ENCODE measurements at regions of chr5 and their contacts with region 1.

Region 1: GRCh38 chr5:177071666-177072385 is 14.9 kb upstream of the FGFR4 start:
- DNase-seq: peak; percentile 69
- ATAC-seq: peak; percentile 93
- H3K4me3 ChIP-seq: no peak overlapping the region
- H3K27ac ChIP-seq: no peak overlapping the region
- H3K4me1 ChIP-seq: peaks cover 0 to 3% of the 10 kb centered on the region in 2 experiments; a peak in 1 of 4 replicates
- H3K27me3 ChIP-seq: no peaks in the 10 kb centered on the region
- CTCF ChIP-seq: peak; percentile 79 to 93 (median 87)
- POLR2A ChIP-seq: no peak
- RAD21 ChIP-seq: peak; percentile 78

Region 2: GRCh38 chr5:176817841-176818377 is 253.9 kb before region 1 on chr5:
- CTCF ChIA-PET with region 1: no interaction called
- POLR2A ChIA-PET with region 1: no interaction called
- RAD21 ChIA-PET with region 1: no interaction called
- intact Hi-C with region 1: no loop called
- DNase-seq: no peak
- ATAC-seq: peak; percentile 68
- H3K4me3 ChIP-seq: peak overlapping the region; percentile 49 to 68
- H3K27ac ChIP-seq: peak overlapping the region; percentile 46; the same call in 1 of the 2 replicates
- H3K4me1 ChIP-seq: peaks cover 33 to 49% of the 10 kb centered on the region in 2 experiments
- H3K27me3 ChIP-seq: no peaks in the 10 kb centered on the region
- CTCF ChIP-seq: peak in 2 of 3 experiments; percentile 74 to 76; a peak in 4 of 6 replicates
- POLR2A ChIP-seq: no peak
- RAD21 ChIP-seq: no peak

Region 3: GRCh38 chr5:177086924-177087706 is 15.3 kb after region 1 on chr5:
- CTCF ChIA-PET with region 1: interaction called, 64 read pairs
- POLR2A ChIA-PET with region 1: interaction called, 6 read pairs
- RAD21 ChIA-PET with region 1: no interaction called
- intact Hi-C with region 1: no loop called
- DNase-seq: peak; percentile 61
- ATAC-seq: peak; percentile 89
- H3K4me3 ChIP-seq: peak overlapping the region; percentile 77 to 96
- H3K27ac ChIP-seq: peak overlapping the region; percentile 80
- H3K4me1 ChIP-seq: peaks cover 6 to 13% of the 10 kb centered on the region in 2 experiments; a peak in 3 of 4 replicates
- H3K27me3 ChIP-seq: no peaks in the 10 kb centered on the region
- CTCF ChIP-seq: peak in 2 of 3 experiments; percentile 79 to 92; a peak in 5 of 6 replicates
- POLR2A ChIP-seq: peak; percentile 52
- RAD21 ChIP-seq: no peak; the same call in 1 of the 2 replicates